K562 (cell line): ENCODE measurements at regions of chr2 and their contacts with region 1.

Region 1: DNA sequence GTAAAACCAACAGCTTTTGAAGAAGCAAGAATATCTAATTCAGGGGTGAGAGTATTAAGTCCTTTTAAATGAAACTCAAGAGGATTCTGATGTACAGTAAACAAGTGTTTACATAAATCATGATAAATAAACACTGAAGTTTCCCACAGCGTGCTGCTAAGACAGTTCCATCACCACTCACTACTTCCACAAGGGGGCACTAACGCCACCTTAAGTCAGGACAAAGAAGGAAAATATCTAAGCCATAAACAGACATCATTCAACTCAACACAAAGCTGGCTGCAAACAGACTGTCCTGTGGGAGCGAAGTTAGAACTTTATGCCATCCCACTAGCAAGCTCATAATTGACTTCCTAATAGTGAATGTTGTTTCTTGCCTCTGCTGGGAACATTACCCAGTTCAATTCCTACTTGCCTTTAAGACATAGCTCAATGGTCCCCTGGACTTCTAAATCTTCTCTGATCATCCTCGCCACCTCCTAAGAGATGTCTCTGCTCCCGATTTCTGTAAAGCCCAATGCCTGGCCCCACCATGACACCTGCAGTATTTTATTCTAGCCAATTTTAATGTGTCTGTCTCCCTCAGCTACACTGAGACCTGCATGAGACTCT is 36.5 kb downstream of the MRPL44 start:
- DNase-seq: peak; percentile 46 to 71 (median 48)
- ATAC-seq: peak; percentile 78
- H3K4me3 ChIP-seq: no peak overlapping the region
- H3K27ac ChIP-seq: no peak overlapping the region
- H3K4me1 ChIP-seq: peaks cover 0 to 12% of the 10 kb centered on the region in 2 experiments; a peak in 2 of 5 replicates
- H3K27me3 ChIP-seq: peaks cover 5 to 18% of the 10 kb centered on the region in 2 experiments; a peak in 3 of 5 replicates
- CTCF ChIP-seq: peak; percentile 49 to 67 (median 65); a peak in 5 of 6 replicates
- EP300 ChIP-seq: no peak
- POLR2A ChIP-seq: no peak
- RAD21 ChIP-seq: peak; percentile 75 to 87

Region 2: GRCh38 chr2:223896833-223897311 is 96.9 kb before region 1 on chr2:
- CTCF ChIA-PET with region 1: no interaction called
- POLR2A ChIA-PET with region 1: no interaction called
- in situ Hi-C with region 1: no loop called
- intact Hi-C with region 1: no loop called
- DNase-seq: no peak
- ATAC-seq: no peak
- H3K4me3 ChIP-seq: no peak overlapping the region
- H3K27ac ChIP-seq: no peak overlapping the region
- H3K4me1 ChIP-seq: no peaks in the 10 kb centered on the region
- H3K27me3 ChIP-seq: no peaks in the 10 kb centered on the region
- CTCF ChIP-seq: no peak
- EP300 ChIP-seq: no peak
- POLR2A ChIP-seq: no peak
- RAD21 ChIP-seq: no peak

Region 3: GRCh38 chr2:223970343-223971128 is 23.2 kb before region 1 on chr2:
- CTCF ChIA-PET with region 1: interaction called, 9 read pairs
- POLR2A ChIA-PET with region 1: interaction called, 4 read pairs
- in situ Hi-C with region 1: no loop called
- intact Hi-C with region 1: loop called (anchors 2 kb)
- DNase-seq: peak in 3 of 4 experiments; percentile 14 to 58 (median 18)
- ATAC-seq: peak; percentile 80
- H3K4me3 ChIP-seq: no peak overlapping the region
- H3K27ac ChIP-seq: no peak overlapping the region
- H3K4me1 ChIP-seq: no peaks in the 10 kb centered on the region
- H3K27me3 ChIP-seq: no peaks in the 10 kb centered on the region
- CTCF ChIP-seq: peak; percentile 45 to 78 (median 70); a peak in 5 of 6 replicates
- EP300 ChIP-seq: no peak
- POLR2A ChIP-seq: no peak
- RAD21 ChIP-seq: peak; percentile 88 to 89

Region 4: DNA sequence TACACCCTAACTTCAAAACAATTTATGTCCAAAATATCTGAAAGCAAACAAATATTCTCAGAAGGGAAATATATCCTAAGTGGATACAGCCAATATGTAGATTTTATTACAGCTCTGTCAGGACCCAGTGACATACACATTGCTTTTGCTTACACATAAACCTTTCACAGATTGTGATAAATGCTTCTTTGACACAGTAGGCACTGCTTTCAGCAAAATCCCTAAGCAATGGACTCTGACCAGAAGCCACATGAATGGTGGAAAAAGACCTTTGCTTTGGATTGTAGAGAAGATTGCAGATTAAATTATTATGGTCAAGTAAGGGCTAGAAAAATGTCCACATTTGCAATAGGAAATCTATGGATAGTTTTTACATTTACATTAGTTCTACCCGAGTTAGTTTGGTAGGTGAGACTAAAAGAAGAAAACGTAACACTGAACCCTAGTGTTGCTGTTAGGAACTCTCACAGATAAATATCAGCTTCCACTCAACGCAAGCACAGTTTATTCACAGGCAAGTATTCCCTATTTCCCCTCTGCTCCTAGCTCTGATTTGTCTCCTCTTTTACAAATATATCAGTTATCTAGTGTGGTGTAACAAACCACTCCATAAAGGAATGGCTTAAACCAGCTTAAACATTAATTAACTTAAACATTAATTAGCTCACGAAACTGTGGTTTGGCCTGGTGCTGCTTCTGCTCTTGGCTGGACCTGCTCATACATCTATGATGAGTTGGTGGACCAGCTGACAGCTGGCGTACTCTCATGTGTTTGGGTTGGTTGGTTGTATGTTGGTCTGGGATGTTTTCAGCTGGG is 69.0 kb after region 1 on chr2:
- CTCF ChIA-PET with region 1: no interaction called
- POLR2A ChIA-PET with region 1: no interaction called
- in situ Hi-C with region 1: no loop called
- intact Hi-C with region 1: loop called (anchors 5 kb)
- DNase-seq: no peak
- ATAC-seq: no peak
- H3K4me3 ChIP-seq: no peak overlapping the region
- H3K27ac ChIP-seq: no peak overlapping the region
- H3K4me1 ChIP-seq: no peaks in the 10 kb centered on the region
- H3K27me3 ChIP-seq: no peaks in the 10 kb centered on the region
- CTCF ChIP-seq: no peak
- EP300 ChIP-seq: no peak
- POLR2A ChIP-seq: no peak
- RAD21 ChIP-seq: peak; percentile 22 to 47; a peak in 3 of 4 replicates

Region 5: DNA sequence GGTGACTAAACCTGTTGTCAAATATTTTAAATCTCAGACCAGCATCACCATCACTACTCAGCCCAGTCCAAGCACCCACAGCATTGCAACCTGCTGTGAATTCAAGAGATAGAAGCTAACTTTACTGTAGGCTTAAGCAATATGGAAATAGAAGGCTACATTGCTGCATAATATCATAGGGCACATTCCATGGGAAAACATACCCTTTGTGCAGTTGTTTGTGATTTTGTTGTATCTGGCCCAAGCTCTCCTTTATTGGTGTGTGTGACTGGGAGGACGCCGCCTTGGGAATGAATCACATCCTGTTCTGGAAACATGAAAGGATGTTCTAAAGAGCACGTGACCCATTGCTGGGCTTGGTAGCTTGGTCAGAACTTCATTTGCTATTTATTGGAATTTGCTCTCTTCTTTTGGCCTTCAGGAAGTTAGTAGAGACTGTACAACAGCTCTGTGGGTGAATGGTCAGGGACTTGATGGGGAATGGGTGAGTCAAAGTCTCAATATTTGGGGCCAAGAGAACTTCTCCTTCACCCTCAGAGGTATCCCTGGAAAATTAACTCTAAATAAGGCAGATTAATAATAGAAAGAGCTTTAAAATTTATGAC is 152.1 kb after region 1 on chr2:
- CTCF ChIA-PET with region 1: no interaction called
- POLR2A ChIA-PET with region 1: no interaction called
- in situ Hi-C with region 1: no loop called
- intact Hi-C with region 1: loop called (anchors 10 kb)
- DNase-seq: no peak
- ATAC-seq: no peak
- H3K4me3 ChIP-seq: no peak overlapping the region
- H3K27ac ChIP-seq: no peak overlapping the region
- H3K4me1 ChIP-seq: no peaks in the 10 kb centered on the region
- H3K27me3 ChIP-seq: no peaks in the 10 kb centered on the region
- CTCF ChIP-seq: no peak
- EP300 ChIP-seq: no peak
- POLR2A ChIP-seq: no peak
- RAD21 ChIP-seq: no peak

Region 6: DNA sequence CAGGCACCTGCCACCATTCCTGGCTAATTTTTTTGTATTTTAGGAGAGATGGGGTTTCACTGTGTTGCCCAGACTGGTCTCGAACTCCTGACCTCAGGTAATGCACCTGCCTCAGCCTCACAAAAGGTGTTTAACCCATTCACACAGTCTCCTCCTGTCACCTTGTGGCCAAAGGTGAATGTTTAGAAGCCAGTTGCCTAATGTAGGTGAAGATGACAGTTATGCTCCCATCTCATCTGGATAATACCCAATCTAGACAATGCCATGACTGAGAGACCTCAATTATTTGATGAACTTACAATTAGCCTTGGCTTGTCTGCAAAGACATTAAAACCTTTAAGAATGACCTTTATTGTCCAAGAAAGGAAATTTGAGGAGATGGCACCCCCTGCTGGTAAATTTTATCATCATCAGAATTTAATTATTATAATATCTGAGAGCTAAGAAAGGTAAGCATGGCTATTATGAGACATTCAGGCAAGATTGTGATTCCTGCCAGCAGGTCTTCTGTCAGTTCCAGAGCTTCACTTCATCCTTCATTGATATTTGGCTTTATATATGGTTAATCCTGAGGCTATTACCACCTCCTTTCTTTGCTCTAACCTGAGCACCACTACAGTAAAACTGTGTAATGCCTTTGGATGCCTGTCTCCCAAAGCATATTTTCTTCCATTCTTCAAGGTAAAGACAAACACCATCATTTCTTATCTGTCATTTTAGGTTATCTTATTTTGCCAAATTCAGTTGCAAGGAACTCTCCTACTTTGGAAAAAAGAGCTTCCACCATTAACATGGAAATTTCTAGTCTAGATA is 290.6 kb after region 1 on chr2:
- CTCF ChIA-PET with region 1: interaction called, 20 read pairs
- POLR2A ChIA-PET with region 1: no interaction called
- in situ Hi-C with region 1: loop called (anchors 10 kb)
- intact Hi-C with region 1: loop called (anchors 1 kb)
- DNase-seq: peak; percentile 3 to 15 (median 8)
- ATAC-seq: peak; percentile 67; the same call in 2 of the 3 replicates
- H3K4me3 ChIP-seq: no peak overlapping the region
- H3K27ac ChIP-seq: no peak overlapping the region
- H3K4me1 ChIP-seq: no peaks in the 10 kb centered on the region
- H3K27me3 ChIP-seq: 0 out of 5 replicates have a peak, but pooled peaks cover 0 to 2% of the 10 kb centered on the region in 2 experiments
- CTCF ChIP-seq: peak; percentile 40 to 53 (median 44); a peak in 5 of 6 replicates
- EP300 ChIP-seq: no peak
- POLR2A ChIP-seq: no peak
- RAD21 ChIP-seq: peak; percentile 92 to 93

Region 7: GRCh38 chr2:224650815-224651439 is 657.2 kb after region 1 on chr2:
- CTCF ChIA-PET with region 1: no interaction called
- POLR2A ChIA-PET with region 1: no interaction called
- in situ Hi-C with region 1: no loop called
- intact Hi-C with region 1: loop called (anchors 5 kb)
- DNase-seq: peak; percentile 28 to 53 (median 33)
- ATAC-seq: peak; percentile 88
- H3K4me3 ChIP-seq: no peak overlapping the region
- H3K27ac ChIP-seq: no peak overlapping the region
- H3K4me1 ChIP-seq: no peaks in the 10 kb centered on the region; a peak in 1 of 5 replicates
- H3K27me3 ChIP-seq: no peaks in the 10 kb centered on the region
- CTCF ChIP-seq: peak; percentile 46 to 72 (median 63); a peak in 5 of 6 replicates
- EP300 ChIP-seq: no peak
- POLR2A ChIP-seq: no peak
- RAD21 ChIP-seq: peak; percentile 69 to 80